Left cardiac atrium (tissue), 4 donors: ENCODE measurements at regions of chr3 and their contacts with region 1.

Region 1: DNA sequence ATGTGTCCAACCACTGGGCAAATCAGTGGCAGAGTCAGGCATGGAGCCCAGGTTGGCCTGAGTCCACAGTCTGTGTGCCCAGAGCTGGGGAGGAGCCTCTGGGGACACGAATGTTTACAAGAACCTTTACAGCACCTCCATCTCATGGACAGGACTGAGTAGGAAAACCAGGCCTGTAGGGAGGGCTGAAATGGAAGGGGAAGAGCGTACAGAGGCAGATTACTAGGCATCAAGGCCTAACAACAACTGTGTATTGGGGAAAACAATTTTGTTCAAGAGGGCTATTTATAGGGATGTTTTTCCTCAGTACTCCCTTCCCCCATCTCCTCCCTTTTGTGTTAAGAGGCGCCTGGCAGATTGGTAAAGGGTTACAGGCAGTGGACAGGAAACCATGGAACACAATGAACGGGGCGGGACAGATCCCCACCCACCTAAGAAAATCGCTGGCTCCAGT is 15.1 kb upstream of the ARHGAP31 start:
- DNase-seq: peak; percentile 71
- ATAC-seq: peak; percentile 84 to 86

Region 2: GRCh38 chr3:119352849-119353502 is 73.8 kb after region 1 on chr3:
- intact Hi-C with region 1: loop called in 1 of 2 experiments (anchors 5 kb)
- DNase-seq: no peak
- ATAC-seq: peak; percentile 46 to 52

Region 3: GRCh38 chr3:119359476-119360326 is 80.6 kb after region 1 on chr3:
- intact Hi-C with region 1: loop called (anchors 5 kb)
- DNase-seq: no peak
- ATAC-seq: no peak

Region 4: GRCh38 chr3:119463171-119464169 is 184.3 kb after region 1 on chr3 and contains the start of gene TMEM39A:
- intact Hi-C with region 1: no loop called
- DNase-seq: peak; percentile 100
- ATAC-seq: peak; percentile 96 to 97
- total RNA-seq, gene TMEM39A: 27.0 to 40.5 TPM